ENCODE measurements at regions of chr14 and their contacts with region 1.

Region 1: DNA sequence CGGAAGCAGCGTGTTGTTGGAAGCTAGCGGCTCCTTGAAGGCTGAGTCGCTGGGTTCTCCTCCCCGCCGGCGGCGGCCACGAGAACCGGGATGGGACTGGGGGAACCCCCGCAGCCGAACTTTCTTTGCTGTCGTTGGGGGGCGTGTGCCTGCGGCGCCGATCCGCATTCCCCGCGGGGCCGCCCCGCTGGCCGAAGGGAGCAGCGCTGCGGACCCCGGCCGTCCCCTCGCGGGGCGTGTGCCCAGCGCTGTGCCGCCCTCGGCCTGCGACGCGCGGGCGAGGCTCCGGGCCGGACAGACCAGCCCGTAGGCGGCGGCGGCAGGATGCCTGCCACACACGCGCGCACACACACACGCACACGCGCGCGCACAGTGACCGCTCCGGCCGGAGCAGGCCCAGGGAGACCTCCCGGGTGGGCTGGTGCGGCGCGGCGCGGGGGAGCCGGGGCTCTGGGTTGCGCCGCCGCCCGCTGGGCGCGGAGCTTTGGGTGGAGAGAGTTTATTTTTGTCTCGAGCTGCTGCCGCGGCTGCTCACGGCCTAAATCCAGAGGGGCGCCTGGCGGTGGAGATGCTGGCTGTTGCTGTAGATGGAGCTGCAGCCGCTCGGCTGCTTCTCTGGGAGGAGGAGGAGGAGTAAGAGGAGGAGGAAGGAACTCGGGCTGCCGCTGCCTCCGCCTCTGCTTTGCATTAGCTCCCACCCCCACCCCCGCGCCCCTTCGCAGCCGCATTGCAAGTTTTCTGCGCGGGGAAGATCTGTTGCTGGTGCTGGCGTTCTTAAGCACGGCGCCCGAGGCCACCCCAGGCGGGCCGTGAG is at the start of gene SAMD4A:
- DNase-seq: peak; percentile 89
- H3K4me3 ChIP-seq: peak within 1 kb of the TSS; percentile 92
- H3K27ac ChIP-seq: peak within 1 kb of the TSS; percentile 83
- H3K4me1 ChIP-seq: peaks cover 58% of the 10 kb centered on the region
- H3K27me3 ChIP-seq: no peaks in the 10 kb centered on the region
- total RNA-seq, gene SAMD4A: 33.0 and 34.4 TPM in 2 replicates

Region 2: DNA sequence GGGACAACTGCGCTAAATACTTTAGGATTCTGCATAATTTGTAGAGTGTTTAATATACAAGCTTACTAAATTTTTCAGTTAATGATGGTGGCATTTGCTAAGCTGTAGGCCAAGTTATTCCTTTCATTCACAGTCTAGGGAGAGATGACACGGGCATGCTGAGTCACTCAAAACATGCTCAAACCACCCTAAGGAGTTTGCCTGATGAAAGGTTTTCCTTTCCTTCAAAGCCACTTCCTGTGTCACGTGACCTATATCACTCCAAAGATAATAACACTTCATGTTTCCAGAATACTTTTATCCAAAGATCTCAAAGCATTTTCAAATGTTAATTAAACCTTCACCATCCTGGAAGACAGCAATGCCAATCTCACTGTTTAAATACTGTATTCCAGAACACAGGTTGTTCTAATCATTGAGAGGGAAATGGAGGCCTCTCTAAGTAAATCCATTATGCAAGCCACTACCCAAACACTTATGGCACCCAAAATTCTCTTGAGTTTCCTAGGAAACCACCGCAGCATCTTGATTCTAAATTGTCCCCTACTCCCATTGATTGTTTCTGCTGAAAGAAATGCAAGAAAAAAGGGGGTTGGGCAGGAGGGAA is 376.8 kb before region 1 on chr14:
- in situ Hi-C with region 1: no loop called
- DNase-seq: peak; percentile 80
- H3K4me3 ChIP-seq: no peak overlapping the region
- H3K27ac ChIP-seq: peak overlapping the region; percentile 12; the same call in 1 of the 2 replicates
- H3K4me1 ChIP-seq: peaks cover 12% of the 10 kb centered on the region
- H3K27me3 ChIP-seq: peaks cover 5% of the 10 kb centered on the region; the same call in 1 of the 2 replicates

Region 3: DNA sequence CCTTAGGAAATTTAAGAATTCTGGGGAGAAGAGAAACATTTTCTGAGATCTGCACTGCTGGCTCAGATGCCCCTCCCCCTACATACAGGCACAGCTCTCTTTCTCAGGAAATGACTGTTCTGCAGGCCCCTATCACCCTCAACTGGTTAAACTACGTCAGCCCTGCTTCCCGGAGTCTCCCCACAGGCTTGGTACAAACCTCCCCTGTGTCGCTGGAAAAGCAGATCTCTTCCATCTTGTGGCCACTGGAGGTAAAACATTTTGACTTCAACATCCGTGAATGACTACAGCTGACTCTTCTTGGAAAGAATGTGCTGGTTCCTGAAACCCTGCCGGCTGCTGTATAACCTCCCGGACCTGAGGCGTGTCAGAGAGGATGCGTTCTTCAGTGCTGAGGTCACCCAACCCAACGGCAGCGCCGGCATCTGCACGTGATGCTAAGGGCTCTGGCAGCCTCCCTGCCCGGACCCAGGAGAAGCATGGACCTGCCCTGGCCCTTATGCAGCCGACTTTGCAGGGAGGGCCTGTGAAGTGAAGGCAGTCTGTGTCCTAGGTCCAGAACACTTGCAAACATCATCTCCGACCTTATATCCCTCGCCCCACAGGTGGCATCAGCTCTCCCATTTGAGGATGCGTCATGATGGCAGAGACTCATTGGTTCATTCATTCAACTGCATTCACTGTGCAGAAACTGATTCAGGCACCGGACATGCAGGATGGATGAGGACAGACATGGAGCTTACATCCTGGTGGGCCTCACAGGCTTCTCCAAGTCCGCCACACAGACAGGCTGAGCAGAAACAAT is 206.8 kb after region 1 on chr14:
- in situ Hi-C with region 1: loop called (anchors 10 kb)
- DNase-seq: peak; percentile 99
- H3K4me3 ChIP-seq: peak overlapping the region; percentile 60
- H3K27ac ChIP-seq: peak overlapping the region; percentile 99
- H3K4me1 ChIP-seq: peaks cover 47% of the 10 kb centered on the region
- H3K27me3 ChIP-seq: no peaks in the 10 kb centered on the region

Region 4: GRCh38 chr14:54981698-54982097 is 415.1 kb after region 1 on chr14:
- in situ Hi-C with region 1: loop called (anchors 25 kb)
- DNase-seq: peak; percentile 58
- H3K4me3 ChIP-seq: no peak overlapping the region
- H3K27ac ChIP-seq: no peak overlapping the region
- H3K4me1 ChIP-seq: peaks cover 7% of the 10 kb centered on the region
- H3K27me3 ChIP-seq: no peaks in the 10 kb centered on the region

Measured in GM23248 (cell line).